ENCODE measurements at regions of chr1 and their contacts with region 1.

Region 1: DNA sequence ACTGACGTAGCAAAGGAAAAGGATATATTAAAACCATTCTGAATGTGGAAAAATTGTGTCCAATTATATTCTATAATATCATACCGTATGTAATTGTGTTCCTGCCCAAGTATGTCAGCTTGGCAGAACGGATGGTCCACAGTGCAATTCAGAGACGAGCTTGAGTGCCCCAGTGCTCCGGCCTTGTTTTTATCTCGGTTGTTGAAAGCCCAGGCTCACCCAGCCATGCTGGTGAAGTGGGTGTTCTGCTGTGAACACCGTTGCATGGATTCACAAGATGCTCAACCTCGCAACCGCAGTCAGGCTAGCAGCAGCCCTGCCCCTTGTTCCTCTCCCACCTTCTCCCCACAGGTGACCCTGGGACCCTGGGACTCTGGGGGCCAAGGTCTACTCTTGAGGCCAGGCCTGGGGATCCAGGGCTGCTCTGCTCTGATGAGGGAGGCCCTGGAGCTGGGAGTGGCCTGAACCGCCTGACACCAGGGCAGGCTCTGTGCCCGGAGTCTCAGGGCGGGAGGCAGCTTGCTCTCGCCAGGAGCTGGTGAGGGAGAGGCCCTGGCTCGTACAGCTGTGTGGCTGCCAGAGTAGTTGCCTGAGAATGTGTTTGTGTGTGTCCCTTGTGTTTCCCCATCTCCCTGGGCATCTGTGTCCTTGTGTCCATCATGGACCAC is 11.2 kb downstream of the PTPRF start:
- DNase-seq: peak; percentile 72
- ATAC-seq: peak; percentile 87 to 98 (median 94)
- H3K4me3 ChIP-seq: no peak overlapping the region
- H3K27ac ChIP-seq: peak overlapping the region; percentile 16 to 71 (median 58)
- H3K4me1 ChIP-seq: peaks cover 0 to 24% (median 10%) of the 10 kb centered on the region in 9 donors
- H3K27me3 ChIP-seq: no peaks in the 10 kb centered on the region
- CTCF ChIP-seq: no peak

Region 2: GRCh38 chr1:43622471-43622870 is 80.6 kb after region 1 on chr1:
- intact Hi-C with region 1: no loop called
- DNase-seq: no peak
- ATAC-seq: no peak
- H3K4me3 ChIP-seq: no peak overlapping the region
- H3K27ac ChIP-seq: no peak overlapping the region
- H3K4me1 ChIP-seq: no peaks in the 10 kb centered on the region
- H3K27me3 ChIP-seq: no peaks in the 10 kb centered on the region
- CTCF ChIP-seq: no peak

Region 3: DNA sequence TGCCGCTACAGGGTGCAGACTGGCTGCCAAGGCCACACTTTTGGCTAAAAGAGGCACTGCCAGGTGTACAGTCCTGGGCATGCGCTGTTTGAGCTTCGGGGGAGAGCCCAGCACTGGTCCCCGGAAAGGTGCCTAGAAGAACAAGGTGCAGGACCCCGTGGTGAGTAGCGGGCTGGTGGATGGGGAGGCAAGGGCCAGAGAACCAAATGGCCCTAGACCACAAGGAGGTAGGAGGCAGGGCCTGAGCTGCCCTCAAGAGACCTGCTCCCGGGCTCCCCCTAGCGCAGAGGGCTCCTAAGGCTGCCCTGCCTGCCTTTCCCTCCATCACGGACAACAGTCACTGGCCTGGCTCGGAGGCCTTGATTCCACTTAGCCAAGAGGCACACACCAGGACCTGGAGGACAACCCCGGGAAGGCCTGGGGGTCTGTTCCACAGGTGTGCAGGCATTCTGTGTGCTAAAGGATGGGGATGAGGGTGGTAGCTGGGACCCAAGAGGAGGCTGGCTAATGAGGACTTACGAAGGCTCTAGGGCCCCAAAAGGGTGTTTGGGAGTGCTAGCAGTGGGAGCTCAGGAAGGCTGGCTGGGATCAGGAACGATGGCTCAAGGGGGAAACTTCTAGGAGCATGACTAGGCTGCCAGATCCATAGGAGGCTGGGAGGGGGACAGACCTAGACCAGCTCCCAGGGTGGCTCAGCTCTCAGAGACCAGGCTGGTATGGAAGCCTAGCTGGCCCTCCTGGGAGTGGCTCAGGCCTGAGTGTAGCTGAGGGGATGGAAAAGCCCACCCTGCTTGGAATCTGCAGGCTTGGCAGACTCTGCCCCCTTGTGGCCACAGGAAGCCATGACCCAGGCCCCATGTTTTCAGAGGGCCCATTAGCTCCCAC is 392.5 kb after region 1 on chr1:
- intact Hi-C with region 1: loop called in 2 of 10 experiments (anchors 5 to 10 kb)
- DNase-seq: peak; percentile 44 to 55
- ATAC-seq: peak in 7 of 8 donors; percentile 46 to 75 (median 62)
- H3K4me3 ChIP-seq: peak overlapping the region in 4 of 10 donors; percentile 36 to 44 (median 42)
- H3K27ac ChIP-seq: peak overlapping the region in 1 of 10 donors; percentile 9
- H3K4me1 ChIP-seq: peaks cover 6 to 40% (median 23%) of the 10 kb centered on the region in 9 donors
- H3K27me3 ChIP-seq: peaks cover 0 to 41% (median 26%) of the 10 kb centered on the region in 7 donors
- CTCF ChIP-seq: peak; percentile 72 to 87 (median 78)

Measured in heart right ventricle (tissue), 16 donors.